Dorsolateral prefrontal cortex (tissue), 120 donors: ENCODE measurements at regions of chr4 and their contacts with region 1.

Region 1: DNA sequence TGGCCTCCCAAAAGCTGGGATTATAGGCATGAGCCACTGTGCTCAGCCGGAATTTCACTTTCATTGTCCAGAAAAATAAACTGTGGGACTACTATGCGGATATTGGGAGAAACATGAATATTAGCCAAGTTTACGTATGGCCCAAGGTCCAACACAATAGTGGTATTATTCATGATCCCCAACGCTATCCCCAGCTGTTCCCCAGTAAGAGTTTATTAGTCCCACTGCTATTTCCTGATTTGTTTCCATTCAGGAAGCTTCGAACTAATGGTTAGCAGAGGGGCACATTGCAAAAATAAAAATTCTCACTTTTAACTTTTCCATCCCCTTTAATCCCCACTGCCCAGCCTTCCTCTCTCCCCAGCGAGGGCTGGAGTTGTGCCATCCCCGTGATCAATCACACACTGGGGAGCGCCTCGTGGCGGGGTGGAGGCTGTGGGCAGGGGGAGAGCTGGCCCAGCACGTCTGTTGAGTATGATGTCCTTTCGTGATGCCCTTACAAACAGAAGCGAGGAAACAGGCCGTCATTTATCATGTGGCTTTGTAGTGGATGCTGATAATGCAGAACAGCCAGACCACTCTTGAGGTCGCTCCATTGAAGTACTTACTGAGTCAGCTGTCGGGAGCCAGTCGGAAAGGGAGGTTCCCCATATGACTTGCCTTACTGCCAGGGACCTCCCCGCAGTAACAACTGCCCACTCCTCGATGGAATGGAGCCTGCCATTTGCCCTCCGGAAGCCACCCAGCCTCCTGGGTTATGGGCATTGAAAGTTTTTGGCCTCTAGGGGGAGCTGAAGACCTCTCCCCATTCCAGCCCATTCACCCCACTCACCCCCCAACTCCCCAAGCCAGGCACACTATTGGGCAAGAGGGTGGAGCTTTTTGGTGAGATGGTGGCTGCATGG is 117.0 kb downstream of the KDR start:
- DNase-seq: peak in 1 of 10 donors; percentile 33
- H3K4me3 ChIP-seq: peak overlapping the region in 7 of 59 donors; percentile 9 to 49 (median 24)
- H3K27ac ChIP-seq: peak overlapping the region in 13 of 59 donors; percentile 0 to 74 (median 51)
- H3K27me3 ChIP-seq: peaks cover 0 to 5% (median 0%) of the 10 kb centered on the region in 45 donors
- CTCF ChIP-seq: peak in 41 of 56 donors; percentile 12 to 50 (median 32)

Region 2: GRCh38 chr4:55069248-55069647 is 60.8 kb after region 1 on chr4:
- intact Hi-C with region 1: no loop called
- DNase-seq: no peak
- H3K4me3 ChIP-seq: no peak overlapping the region
- H3K27ac ChIP-seq: no peak overlapping the region
- H3K27me3 ChIP-seq: peaks cover 0 to 5% (median 0%) of the 10 kb centered on the region in 45 donors
- CTCF ChIP-seq: no peak

Region 3: DNA sequence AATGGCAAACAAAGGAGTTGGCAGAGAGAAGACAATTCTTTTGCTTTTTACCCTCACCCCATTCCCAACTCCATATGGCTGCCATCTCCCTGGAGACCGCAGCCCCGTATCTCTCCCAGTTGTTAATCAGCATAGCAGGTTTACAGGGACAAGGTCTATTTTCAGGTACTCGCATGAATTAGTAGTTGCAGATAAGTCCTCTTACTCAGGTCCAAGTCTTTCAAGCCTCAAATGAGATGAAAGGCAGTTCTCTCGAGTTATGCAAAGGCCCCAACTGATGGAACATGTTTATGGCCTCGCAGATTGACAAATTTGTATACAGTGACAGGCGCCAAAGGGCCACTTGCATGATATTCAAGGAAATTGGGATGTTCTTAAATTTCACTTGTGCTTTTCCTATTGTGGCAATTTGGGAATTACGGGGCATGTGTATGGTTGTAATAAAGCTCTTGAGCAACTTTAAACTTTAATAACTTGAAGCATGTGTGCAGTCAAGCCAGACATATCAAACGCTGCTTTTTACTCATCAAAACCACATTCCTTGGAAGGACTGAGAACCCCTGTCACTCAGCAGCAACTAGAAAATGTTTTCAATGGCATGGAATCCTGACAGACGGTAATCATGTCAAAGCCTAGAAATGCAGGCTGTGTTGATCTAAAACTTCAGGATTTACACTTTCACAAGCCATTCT is 71.9 kb after region 1 on chr4:
- intact Hi-C with region 1: loop called in 1 of 2 experiments (anchors 5 kb)
- DNase-seq: no peak
- H3K4me3 ChIP-seq: no peak overlapping the region
- H3K27ac ChIP-seq: peak overlapping the region in 8 of 59 donors; percentile 9 to 61 (median 29)
- H3K27me3 ChIP-seq: peaks cover 0 to 12% (median 0%) of the 10 kb centered on the region in 45 donors
- CTCF ChIP-seq: no peak

Region 4: GRCh38 chr4:55321707-55322264 is 313.4 kb after region 1 on chr4:
- intact Hi-C with region 1: loop called in 1 of 2 experiments (anchors 5 kb)
- DNase-seq: peak in 7 of 10 donors; percentile 37 to 90 (median 70)
- H3K4me3 ChIP-seq: no peak overlapping the region
- H3K27ac ChIP-seq: no peak overlapping the region
- H3K27me3 ChIP-seq: no peaks in the 10 kb centered on the region
- CTCF ChIP-seq: peak; percentile 55 to 97 (median 82)

Region 5: DNA sequence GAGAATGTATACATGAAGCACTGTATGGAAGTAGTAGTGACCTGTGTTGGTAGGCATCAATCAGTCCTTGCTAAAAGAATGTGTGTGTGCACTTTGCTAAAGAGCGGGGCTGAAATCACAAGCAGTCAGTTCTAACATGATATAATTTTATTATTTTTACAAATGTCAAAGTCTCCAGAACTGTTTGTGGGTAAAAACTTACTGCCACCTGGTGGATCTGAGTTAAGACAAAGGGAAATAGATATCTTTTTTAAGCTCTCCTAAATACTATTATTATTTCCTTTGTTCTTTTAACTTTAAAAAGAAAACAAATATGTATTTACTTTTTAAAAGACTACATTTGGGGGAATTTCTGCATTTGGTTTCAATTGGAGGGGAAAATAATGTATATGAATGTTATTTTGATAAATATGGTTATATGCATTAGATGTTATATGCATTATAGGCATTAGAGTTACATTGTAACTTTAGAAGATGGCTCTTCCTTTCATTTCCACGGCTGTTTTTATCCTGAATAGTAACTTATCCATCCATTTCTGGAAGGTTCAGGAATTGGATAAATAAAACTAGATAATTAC is 546.1 kb after region 1 on chr4:
- intact Hi-C with region 1: loop called (anchors 10 kb)
- DNase-seq: no peak
- H3K4me3 ChIP-seq: no peak overlapping the region
- H3K27ac ChIP-seq: no peak overlapping the region
- H3K27me3 ChIP-seq: no peaks in the 10 kb centered on the region
- CTCF ChIP-seq: peak; percentile 11 to 68 (median 48)